A673 (cell line): ENCODE measurements at regions of chr17 and their contacts with region 1.

Region 1: DNA sequence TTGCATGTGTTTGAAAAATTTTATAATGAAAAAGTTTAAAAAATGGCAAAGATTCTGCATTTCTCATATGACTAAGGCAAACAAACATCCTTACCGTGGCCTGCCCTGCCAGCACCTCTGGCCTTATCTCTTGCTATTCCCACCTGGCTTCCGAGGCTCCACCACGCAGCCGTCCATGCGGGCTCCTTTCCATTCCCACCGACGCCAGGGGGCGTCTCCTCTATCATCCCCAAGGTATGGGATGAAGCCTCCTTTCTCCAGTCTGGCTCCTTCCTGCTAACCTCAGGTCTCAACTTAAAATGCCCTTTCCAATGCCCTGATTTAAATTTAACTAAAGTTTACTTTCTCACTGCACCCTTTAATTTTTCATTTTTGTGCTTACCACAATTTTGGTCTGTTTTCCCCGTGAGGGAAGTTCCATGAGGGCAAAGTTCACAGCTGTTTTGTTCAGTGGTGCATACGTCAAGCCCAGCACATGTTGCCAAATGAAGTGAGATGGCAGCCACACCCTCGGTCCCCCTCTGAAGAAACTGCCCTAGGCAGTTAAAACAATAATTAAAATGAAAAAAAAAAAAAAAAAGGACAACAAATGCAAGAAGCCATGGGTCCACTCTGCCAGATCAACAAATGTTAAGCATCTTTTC is 13.3 kb upstream of the SDK2 start:
- DNase-seq: peak; percentile 64
- H3K4me3 ChIP-seq: no peak overlapping the region
- H3K27ac ChIP-seq: no peak overlapping the region
- H3K4me1 ChIP-seq: no peaks in the 10 kb centered on the region
- H3K27me3 ChIP-seq: peaks cover 18% of the 10 kb centered on the region
- CTCF ChIP-seq: peak; percentile 76

Region 2: DNA sequence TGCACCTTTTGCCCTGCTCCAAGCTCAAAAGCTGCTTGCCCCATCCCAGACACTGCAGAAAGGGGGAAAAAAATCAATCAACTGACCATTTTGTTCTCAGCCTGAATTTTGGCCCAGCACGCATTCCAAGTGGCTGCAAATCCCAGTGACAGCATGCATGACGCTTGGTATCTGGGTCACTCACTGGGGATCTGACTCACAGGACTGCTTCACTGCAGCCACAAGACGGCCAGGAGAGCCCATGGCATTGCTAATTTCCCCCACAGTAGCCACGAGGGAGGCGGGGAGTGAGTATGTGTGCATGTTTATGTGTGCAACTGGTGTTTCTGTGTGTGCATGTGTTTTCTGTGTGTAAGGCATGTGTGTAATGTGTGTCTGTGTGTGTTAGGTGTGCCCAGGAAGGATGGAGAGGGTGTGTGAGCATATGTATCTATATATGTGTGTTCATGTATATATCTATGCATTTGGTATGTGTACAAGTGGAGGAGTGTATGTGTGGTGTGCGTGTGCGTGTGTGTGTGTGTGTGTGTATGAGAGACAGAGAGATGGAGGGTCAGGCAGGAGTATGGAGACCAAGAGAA is 47.2 kb before region 1 on chr17:
- CTCF ChIA-PET with region 1: interaction called, 10 read pairs
- POLR2A ChIA-PET with region 1: no interaction called
- intact Hi-C with region 1: no loop called
- DNase-seq: no peak
- H3K4me3 ChIP-seq: no peak overlapping the region
- H3K27ac ChIP-seq: no peak overlapping the region
- H3K4me1 ChIP-seq: no peaks in the 10 kb centered on the region
- H3K27me3 ChIP-seq: no peaks in the 10 kb centered on the region
- CTCF ChIP-seq: no peak

Region 3: DNA sequence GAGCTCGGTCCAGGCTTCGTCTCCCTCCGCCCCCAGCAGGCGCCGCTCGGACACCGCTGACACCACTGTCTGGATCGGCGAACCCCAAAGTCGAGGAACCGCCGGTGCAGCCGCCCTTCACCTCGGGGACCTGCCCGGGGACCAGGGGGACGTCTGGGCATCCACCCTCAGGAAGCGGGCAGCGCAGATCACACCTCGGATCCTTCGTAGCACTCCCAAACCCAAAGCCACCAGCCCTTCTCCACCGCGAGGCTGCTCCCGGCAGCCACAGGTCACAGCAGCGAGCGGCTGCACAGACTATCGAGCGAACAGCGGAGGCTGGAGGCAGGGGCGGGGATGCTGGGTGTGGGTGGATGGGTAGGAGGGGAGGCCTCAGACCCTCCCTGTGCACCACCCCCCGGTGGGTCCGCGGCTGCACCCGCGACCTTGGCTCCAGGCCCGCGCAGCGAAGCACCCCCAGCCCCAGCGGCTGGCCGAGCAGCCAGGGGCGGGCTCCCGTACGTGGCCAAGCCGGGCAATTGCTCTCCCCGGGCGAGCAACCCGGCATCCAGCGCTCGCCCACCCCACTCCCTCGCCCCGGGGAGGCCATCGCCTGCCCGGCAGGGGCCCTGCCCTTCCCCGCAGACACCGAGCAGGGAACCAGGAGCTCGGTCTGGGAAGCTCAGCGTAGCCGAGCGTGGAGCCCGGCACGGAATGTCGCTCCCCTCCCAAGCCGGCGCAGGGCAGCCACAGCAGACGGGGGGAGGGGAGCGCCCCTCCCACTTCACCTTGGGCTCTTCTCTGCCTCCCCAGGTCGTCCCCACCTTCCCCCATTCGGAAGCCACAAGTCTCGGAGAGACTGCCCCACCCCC is 14.4 kb before region 1 on chr17:
- CTCF ChIA-PET with region 1: interaction called, 21 read pairs
- POLR2A ChIA-PET with region 1: no interaction called
- intact Hi-C with region 1: no loop called
- DNase-seq: peak; percentile 21
- H3K4me3 ChIP-seq: peak overlapping the region; percentile 46
- H3K27ac ChIP-seq: no peak overlapping the region
- H3K4me1 ChIP-seq: peaks cover 32% of the 10 kb centered on the region
- H3K27me3 ChIP-seq: peaks cover 66% of the 10 kb centered on the region
- CTCF ChIP-seq: no peak

Region 4: GRCh38 chr17:73956669-73957465 is 299.3 kb after region 1 on chr17:
- CTCF ChIA-PET with region 1: no interaction called
- POLR2A ChIA-PET with region 1: no interaction called
- intact Hi-C with region 1: loop called (anchors 1 kb)
- DNase-seq: peak; percentile 77
- H3K4me3 ChIP-seq: no peak overlapping the region
- H3K27ac ChIP-seq: no peak overlapping the region
- H3K4me1 ChIP-seq: peaks cover 9% of the 10 kb centered on the region
- H3K27me3 ChIP-seq: no peaks in the 10 kb centered on the region
- CTCF ChIP-seq: peak; percentile 76

Region 5: DNA sequence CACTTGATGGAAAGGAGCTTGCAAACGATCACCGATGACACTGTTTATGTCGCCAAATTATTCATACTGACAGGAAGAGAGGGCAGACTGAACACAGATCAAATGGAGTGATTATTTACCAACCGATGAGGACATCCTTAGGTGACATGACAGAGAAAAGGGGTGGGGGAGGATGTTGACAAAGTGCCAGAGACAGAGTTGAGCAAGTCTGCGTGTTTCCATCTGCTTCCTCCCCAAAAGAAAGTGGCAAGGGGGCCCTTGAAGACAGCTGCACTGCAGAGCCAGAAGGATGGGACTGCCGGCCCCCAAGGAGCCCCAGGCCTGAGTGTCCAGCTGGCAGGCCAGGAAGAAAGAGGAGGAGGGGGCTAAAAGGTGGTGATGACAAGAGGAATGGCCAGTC is 354.9 kb after region 1 on chr17:
- CTCF ChIA-PET with region 1: no interaction called
- POLR2A ChIA-PET with region 1: no interaction called
- intact Hi-C with region 1: no loop called
- DNase-seq: no peak
- H3K4me3 ChIP-seq: no peak overlapping the region
- H3K27ac ChIP-seq: no peak overlapping the region
- H3K4me1 ChIP-seq: peaks cover 11% of the 10 kb centered on the region
- H3K27me3 ChIP-seq: peaks cover 20% of the 10 kb centered on the region
- CTCF ChIP-seq: no peak